ENCODE measurements at regions of chr10 and their contacts with region 1.

Region 1: DNA sequence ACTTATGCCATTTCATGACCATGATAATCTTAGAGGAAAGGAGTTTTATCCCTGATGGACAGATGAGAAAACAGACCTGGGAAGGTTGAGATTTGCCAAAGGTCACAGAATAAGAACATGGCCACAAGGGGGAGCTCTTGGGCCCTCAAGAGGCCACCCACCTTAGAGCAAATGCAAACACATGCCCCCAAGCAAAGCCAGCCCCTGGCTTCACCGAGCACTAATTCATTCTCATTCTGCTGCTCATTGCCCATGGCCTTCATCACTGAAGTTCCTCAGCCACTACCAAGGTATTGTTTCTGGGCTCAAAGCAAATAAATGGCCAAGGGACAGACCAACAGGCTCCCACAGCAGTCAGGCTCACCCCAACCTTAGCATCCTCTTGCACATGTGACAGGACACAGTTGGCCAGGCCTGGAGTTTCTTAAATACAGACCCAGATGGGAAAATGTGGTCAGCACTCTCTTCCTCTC is 44.2 kb downstream of the PDLIM1 start:
- DNase-seq: peak; percentile 67 to 78
- ATAC-seq: peak; percentile 60 to 70 (median 66)
- H3K4me3 ChIP-seq: no peak overlapping the region
- H3K27ac ChIP-seq: peak overlapping the region; percentile 59
- H3K4me1 ChIP-seq: peaks cover 48% of the 10 kb centered on the region
- H3K27me3 ChIP-seq: no peaks in the 10 kb centered on the region
- CTCF ChIP-seq: peak; percentile 82

Region 2: GRCh38 chr10:95133016-95133752 is 113.4 kb before region 1 on chr10:
- intact Hi-C with region 1: loop called in 1 of 2 experiments (anchors 2 kb)
- DNase-seq: peak; percentile 30 to 46
- ATAC-seq: peak in 3 of 4 donors; percentile 42 to 60 (median 58)
- H3K4me3 ChIP-seq: no peak overlapping the region
- H3K27ac ChIP-seq: no peak overlapping the region
- H3K4me1 ChIP-seq: no peaks in the 10 kb centered on the region
- H3K27me3 ChIP-seq: peaks cover 0 to 2% (median 0%) of the 10 kb centered on the region in 3 donors
- CTCF ChIP-seq: peak; percentile 63

Region 3: DNA sequence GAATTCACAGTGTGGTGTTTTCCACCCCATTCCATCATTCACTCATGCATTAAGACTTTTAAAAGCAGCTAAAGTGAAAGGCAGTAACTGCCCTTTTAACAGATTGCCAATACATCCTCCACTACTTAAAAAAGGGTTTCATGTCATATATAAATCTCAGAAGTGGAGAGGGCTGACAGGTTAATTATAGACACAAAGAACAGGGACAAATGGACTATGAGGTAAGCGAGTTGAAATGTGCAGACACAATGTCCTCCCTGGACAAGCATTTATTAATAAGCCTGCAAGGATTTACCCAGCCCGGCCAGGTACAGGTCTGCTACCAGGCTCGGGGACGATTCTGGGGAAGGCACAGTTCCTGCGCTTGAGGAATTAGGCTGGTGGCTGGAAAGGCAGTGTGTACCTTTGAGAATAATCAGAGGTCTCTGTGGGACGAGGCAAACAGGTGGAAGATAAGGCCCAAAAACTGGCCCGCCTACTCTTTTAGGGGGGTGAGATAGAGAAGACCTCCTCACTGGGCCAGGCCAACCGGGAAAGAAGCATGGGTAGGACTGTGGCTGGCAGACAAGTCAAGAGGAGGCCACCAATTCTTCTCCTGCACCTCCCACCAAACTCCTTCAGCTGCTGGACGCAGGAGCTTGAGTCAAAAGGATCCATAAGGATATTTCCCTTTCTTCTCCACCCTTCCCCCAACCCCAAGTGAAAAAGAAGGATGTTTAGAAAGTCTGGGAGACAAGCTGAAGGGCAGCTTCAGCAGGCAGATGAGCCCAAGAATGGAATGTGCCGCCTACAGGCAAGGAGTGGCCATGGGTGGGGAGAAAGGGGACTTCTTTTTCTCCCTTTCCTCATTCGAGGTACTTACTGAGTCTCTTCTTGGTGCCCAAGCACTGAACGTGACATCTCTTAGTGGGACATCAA is 42.6 kb after region 1 on chr10:
- intact Hi-C with region 1: loop called in 1 of 2 experiments (anchors 5 kb)
- DNase-seq: peak in 1 of 2 donors; percentile 57
- ATAC-seq: peak; percentile 65 to 75 (median 72)
- H3K4me3 ChIP-seq: peak overlapping the region; percentile 95
- H3K27ac ChIP-seq: peak overlapping the region; percentile 85
- H3K4me1 ChIP-seq: peaks cover 29% of the 10 kb centered on the region
- H3K27me3 ChIP-seq: peaks cover 0 to 9% (median 0%) of the 10 kb centered on the region in 3 donors
- CTCF ChIP-seq: no peak

Region 4: DNA sequence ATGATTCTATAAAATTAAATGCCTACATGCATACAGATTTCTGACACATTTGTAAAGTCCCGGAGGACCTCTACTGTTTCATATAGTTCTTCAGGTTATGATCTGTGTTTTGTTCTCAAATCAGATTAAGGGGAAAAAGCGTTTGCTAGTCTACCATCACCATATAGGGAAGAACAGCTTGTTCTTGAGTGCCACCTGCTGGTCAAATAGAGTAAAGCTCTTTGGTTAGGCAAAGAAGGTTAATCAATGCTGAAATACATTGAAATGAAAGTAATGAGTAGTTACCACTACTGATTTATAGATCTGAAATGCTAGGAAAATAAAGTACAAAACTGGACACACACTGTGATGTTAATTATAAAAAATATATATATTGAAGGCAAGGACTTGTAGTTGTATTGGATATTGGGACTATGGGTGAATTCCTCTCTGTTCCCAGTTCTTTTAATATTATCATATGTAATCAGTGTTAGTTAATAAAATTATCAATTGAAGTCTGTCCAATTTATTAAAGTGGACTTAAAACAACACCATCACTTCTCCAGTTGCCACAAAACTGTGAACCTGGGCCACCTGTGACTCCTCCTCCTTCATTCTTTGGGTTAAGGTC is 116.8 kb after region 1 on chr10:
- intact Hi-C with region 1: loop called (anchors 2 kb)
- DNase-seq: no peak
- ATAC-seq: peak in 3 of 4 donors; percentile 54 to 66 (median 59)
- H3K4me3 ChIP-seq: no peak overlapping the region
- H3K27ac ChIP-seq: no peak overlapping the region
- H3K4me1 ChIP-seq: peaks cover 6% of the 10 kb centered on the region
- H3K27me3 ChIP-seq: no peaks in the 10 kb centered on the region
- CTCF ChIP-seq: peak; percentile 96

Measured in psoas muscle (tissue), 8 donors.